Natural killer cell (primary cell): ENCODE measurements at regions of chr18 and their contacts with region 1.

Region 1: DNA sequence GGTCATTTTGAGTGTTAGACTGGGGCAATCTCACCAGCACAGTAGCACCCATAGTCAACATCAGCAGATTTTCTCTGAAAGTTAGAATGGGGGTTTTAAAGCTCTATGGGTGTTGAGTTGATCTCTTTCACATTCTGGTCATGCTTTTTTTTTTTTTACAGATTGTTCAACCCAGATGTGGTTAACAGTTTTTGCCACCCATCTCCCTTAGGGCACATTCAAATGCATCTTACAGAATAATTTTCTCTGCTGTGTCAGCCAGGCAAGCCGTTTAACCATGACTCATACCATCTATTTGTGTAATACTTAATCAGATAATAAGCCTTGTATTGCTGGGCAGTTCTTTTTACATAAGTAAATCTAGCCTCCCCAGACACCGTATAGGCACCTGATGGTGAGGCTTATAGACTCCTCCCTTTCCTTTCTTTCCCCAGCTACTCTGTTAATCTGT is 62.0 kb downstream of the TGIF1 start:
- DNase-seq: peak in 1 of 2 donors; percentile 69
- ATAC-seq: peak; percentile 89 to 95 (median 93)
- H3K4me3 ChIP-seq: no peak overlapping the region
- H3K4me3 Mint-ChIP-seq: peak overlapping the region; percentile 43
- H3K27ac ChIP-seq: peak overlapping the region; percentile 20
- H3K27ac Mint-ChIP-seq: peak overlapping the region; percentile 56 to 89
- H3K4me1 ChIP-seq: peaks cover 14% of the 10 kb centered on the region
- H3K4me1 Mint-ChIP-seq: peaks cover 24 to 26% of the 10 kb centered on the region in 2 donors
- H3K27me3 ChIP-seq: no peaks in the 10 kb centered on the region
- H3K27me3 Mint-ChIP-seq: peaks cover 5 to 10% of the 10 kb centered on the region in 2 donors
- CTCF ChIP-seq: no peak

Region 2: DNA sequence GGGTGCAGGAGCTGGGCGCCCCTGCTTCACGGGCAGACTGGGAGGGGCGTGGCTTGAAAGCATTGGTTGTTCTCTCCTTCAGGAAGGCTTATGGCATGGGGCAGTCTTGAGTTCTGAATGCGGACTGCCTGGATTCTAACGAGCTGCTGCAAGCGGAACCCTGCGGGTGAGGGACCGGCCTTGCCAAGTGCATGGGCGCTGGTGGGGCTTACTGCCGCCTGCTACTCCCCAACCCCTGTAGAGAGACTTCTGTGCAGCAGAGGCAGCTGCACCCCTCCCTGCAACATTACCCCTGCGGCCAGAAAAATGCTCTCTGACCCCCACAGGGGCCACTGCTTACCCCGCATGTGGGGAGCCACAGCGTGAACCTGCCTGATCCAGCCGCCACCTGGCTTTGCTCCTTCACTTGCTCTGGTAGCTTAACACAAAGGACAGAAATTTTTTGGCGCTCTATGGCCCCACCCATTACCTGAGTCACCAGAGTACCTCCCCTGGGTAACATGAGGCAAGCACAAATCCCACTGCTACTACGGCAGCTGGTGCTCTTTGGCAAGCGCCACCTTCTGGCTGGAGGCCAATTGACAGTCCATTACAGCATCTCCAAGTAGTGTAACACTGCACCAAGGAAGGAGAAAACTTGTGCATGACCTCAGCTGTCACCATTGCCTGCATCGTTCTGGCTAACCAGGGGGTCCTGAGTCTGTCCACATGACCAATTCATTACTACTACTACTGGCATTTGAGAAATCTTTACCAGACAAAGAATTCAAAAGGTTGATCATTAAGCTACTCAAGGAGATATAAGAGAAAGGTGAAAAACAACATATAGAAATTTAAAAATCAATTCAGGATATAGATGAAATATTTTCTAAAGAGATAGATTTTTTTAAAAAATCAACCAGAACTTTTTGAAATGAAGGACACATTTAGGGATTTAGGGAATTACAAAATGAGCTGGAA is 214.6 kb before region 1 on chr18:
- intact Hi-C with region 1: loop called (anchors 2 kb)
- DNase-seq: peak; percentile 87 to 95
- ATAC-seq: peak; percentile 98 to 99 (median 99)
- H3K4me3 ChIP-seq: peak overlapping the region; percentile 81
- H3K4me3 Mint-ChIP-seq: peak overlapping the region; percentile 93
- H3K27ac ChIP-seq: peak overlapping the region; percentile 52
- H3K27ac Mint-ChIP-seq: peak overlapping the region; percentile 37 to 88
- H3K4me1 ChIP-seq: peaks cover 14% of the 10 kb centered on the region
- H3K4me1 Mint-ChIP-seq: peaks cover 7 to 14% of the 10 kb centered on the region in 2 donors
- H3K27me3 ChIP-seq: peaks cover 17% of the 10 kb centered on the region
- H3K27me3 Mint-ChIP-seq: peaks cover 27 to 38% of the 10 kb centered on the region in 2 donors
- CTCF ChIP-seq: peak; percentile 75

Region 3: GRCh38 chr18:3554091-3554601 is 42.2 kb after region 1 on chr18:
- intact Hi-C with region 1: no loop called
- DNase-seq: no peak
- ATAC-seq: no peak
- H3K4me3 ChIP-seq: no peak overlapping the region
- H3K4me3 Mint-ChIP-seq: no peak overlapping the region
- H3K27ac ChIP-seq: no peak overlapping the region
- H3K27ac Mint-ChIP-seq: no peak overlapping the region
- H3K4me1 ChIP-seq: no peaks in the 10 kb centered on the region
- H3K4me1 Mint-ChIP-seq: no peaks in the 10 kb centered on the region
- H3K27me3 ChIP-seq: no peaks in the 10 kb centered on the region
- H3K27me3 Mint-ChIP-seq: peaks cover 0 to 3% of the 10 kb centered on the region in 2 donors
- CTCF ChIP-seq: no peak

Region 4: DNA sequence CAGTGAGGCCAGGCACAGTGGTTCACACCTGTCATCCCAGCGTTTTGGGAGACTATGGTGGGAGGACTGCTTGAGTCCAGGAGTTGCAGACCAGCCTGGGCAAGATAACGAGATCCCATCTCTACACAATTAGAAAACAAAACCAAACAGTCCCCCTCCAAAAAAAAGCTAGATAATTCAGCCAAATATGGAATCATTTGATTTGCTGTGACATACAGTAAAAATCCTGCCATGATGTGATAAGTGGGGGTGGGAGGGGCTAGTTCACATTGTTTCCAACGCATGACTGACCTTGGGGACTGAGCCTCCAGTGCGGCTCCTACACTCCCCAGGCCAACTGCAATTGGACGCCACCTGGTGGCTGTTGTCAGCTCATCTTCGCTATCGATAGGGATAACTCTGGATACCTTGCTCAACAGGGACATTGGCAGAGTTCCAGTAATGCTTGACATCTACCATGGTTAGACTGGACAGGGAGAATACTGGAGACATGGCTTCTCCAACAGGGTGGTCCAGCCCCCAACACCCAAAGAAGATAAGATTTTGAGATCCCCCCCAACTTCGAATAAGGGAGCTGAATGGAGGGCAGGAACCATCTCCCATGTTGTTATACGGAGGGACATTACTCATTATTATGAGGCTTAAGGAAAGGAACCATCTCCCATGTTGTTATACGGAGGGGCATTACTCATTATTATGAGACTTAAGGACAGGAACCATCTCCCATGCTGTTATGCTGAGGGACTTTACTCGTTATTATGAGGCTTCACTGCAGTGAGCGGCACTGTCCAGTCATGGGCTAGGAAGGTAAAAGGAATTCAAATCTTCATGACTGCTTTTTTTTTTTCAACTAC is 73.9 kb after region 1 on chr18:
- intact Hi-C with region 1: loop called (anchors 2 kb)
- DNase-seq: peak; percentile 62 to 86
- ATAC-seq: peak; percentile 85 to 98 (median 98)
- H3K4me3 ChIP-seq: no peak overlapping the region
- H3K4me3 Mint-ChIP-seq: no peak overlapping the region
- H3K27ac ChIP-seq: peak overlapping the region; percentile 33
- H3K27ac Mint-ChIP-seq: no peak overlapping the region
- H3K4me1 ChIP-seq: no peaks in the 10 kb centered on the region
- H3K4me1 Mint-ChIP-seq: peaks cover 0 to 7% of the 10 kb centered on the region in 2 donors
- H3K27me3 ChIP-seq: no peaks in the 10 kb centered on the region
- H3K27me3 Mint-ChIP-seq: peaks cover 0 to 3% of the 10 kb centered on the region in 2 donors
- CTCF ChIP-seq: peak; percentile 63